Cardiac septum (tissue), 1 donor: ENCODE measurements at regions of chr4 and their contacts with region 1.

Region 1: DNA sequence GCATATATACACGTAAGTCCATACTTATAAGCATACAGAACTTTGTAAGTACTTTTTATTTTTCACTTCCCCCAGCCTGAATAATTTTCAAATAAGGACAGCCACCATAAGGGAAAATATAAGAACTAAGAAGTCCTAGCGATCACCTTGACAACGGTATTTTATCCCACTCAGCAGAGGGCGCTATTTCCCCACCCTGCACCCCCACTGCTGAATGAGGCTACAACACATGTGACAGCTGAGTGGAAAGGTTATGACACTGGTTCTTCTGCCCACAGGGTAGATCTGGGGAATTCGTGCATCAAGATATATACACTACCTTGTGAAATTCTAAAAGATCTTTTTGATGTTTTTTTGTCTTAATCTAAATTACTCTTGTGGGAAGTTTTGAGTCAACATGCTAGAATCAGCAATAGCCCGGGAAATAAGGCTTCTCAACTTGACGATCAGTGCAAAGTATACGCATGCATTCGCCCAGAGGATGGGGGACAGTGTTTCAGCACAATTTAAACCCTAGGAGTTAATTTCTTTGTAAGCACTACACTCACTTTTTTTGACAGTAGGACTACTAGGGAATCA is 151.5 kb downstream of the CORIN start:
- DNase-seq: no peak

Region 2: GRCh38 chr4:47836641-47837093 is 150.3 kb after region 1 on chr4:
- intact Hi-C with region 1: loop called (anchors 5 kb)
- DNase-seq: peak; percentile 90

Region 3: DNA sequence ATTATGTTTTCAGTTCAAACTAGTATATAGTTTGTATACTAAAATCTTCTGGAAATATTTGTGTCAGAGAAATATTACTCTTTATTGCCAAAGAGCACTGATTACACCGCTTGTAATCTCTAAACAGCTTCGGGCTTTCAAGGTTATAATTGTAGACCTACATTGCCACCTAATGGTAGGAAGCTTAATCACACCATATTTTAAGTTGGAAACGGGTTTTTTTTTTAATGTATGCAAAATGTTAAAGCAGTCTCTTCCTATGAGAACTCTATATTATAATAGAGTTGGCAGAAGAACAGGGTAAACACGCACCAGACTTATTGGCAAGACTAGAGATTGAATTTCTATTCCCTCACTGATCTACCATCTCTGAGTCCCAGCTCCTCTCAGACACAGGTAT is 247.5 kb after region 1 on chr4:
- intact Hi-C with region 1: loop called (anchors 5 kb)
- DNase-seq: no peak